BJ (cell line): ENCODE measurements at regions of chr12 and their contacts with region 1.

Region 1: GRCh38 chr12:117236456-117237001 is 46.3 kb upstream of the FBXO21 start:
- DNase-seq: no peak
- H3K4me3 ChIP-seq: no peak overlapping the region
- H3K27me3 ChIP-seq: peaks cover 2% of the 10 kb centered on the region; the same call in 1 of the 2 replicates
- CTCF ChIP-seq: peak; percentile 78

Region 2: DNA sequence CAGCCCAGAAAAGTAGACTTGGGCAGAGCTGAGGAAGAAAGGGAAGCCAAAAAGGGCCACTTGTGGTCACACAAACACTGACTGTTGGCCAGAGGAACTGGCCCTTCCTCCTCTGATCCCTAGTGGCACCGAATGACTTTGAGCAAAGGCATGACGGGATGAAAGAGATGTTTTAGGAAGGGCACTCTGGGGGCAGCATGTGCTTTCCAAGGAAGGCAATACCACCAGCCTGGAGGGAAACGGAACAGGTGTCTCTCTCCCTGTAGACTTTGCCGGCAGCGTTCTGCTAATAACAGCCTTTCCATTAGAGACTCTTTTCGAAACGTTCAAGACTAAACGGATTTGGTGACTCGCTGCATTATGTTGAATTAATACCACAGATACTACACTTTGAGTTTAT is 34.0 kb before region 1 on chr12:
- CTCF ChIA-PET with region 1: interaction called, 10 read pairs
- POLR2A ChIA-PET with region 1: no interaction called
- DNase-seq: no peak
- H3K4me3 ChIP-seq: no peak overlapping the region
- H3K27me3 ChIP-seq: no peaks in the 10 kb centered on the region; the same call in 1 of the 2 replicates
- CTCF ChIP-seq: no peak

Region 3: DNA sequence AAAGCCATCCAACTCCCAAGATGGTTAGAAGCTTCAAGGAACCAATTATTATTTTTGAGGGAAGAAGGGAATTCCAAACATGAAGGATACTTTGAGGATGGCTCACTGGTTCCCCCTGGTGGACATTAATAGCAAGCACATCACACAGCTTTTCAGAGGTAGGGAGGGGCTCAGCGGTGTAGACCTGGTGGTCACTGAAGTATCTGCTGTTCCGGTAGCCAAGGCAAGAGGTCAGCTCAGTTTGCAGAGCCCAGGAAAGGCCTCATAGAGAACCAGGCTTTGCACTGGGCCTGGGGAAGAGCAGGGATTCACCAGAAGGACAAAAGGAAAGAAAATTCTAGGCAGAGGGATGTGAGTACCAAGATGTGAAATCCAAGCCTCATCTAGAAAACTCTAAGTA is 613.5 kb after region 1 on chr12:
- CTCF ChIA-PET with region 1: interaction called, 34 read pairs
- POLR2A ChIA-PET with region 1: no interaction called
- DNase-seq: no peak
- H3K4me3 ChIP-seq: no peak overlapping the region
- H3K27me3 ChIP-seq: peaks cover 5% of the 10 kb centered on the region; the same call in 1 of the 2 replicates
- CTCF ChIP-seq: peak; percentile 90

Region 4: GRCh38 chr12:117857632-117858612 is 621.4 kb after region 1 on chr12:
- CTCF ChIA-PET with region 1: interaction called, 26 read pairs
- POLR2A ChIA-PET with region 1: no interaction called
- DNase-seq: no peak
- H3K4me3 ChIP-seq: no peak overlapping the region
- H3K27me3 ChIP-seq: no peaks in the 10 kb centered on the region; the same call in 1 of the 2 replicates
- CTCF ChIP-seq: peak; percentile 72